Stomach (tissue), 19 donors: ENCODE measurements at regions of chr3 and their contacts with region 1.

Region 1: GRCh38 chr3:67357610-67358458 is 296.6 kb downstream of the SUCLG2 start:
- DNase-seq: peak in 1 of 2 donors; percentile 68
- H3K4me3 ChIP-seq: no peak overlapping the region
- H3K27ac ChIP-seq: no peak overlapping the region
- H3K4me1 ChIP-seq: no peaks in the 10 kb centered on the region
- H3K27me3 ChIP-seq: no peaks in the 10 kb centered on the region
- CTCF ChIP-seq: peak in 2 of 7 experiments; percentile 10 to 20
- EP300 ChIP-seq: no peak
- POLR2A ChIP-seq: no peak

Region 2: GRCh38 chr3:67113802-67114407 is 243.9 kb before region 1 on chr3:
- intact Hi-C with region 1: loop called (anchors 5 kb)
- DNase-seq: peak; percentile 82 to 94
- H3K4me3 ChIP-seq: no peak overlapping the region
- H3K27ac ChIP-seq: no peak overlapping the region
- H3K4me1 ChIP-seq: peaks cover 0 to 5% (median 0%) of the 10 kb centered on the region in 4 donors
- H3K27me3 ChIP-seq: no peaks in the 10 kb centered on the region
- CTCF ChIP-seq: peak in 5 of 7 experiments; percentile 59 to 88 (median 79)
- EP300 ChIP-seq: no peak
- POLR2A ChIP-seq: no peak

Region 3: DNA sequence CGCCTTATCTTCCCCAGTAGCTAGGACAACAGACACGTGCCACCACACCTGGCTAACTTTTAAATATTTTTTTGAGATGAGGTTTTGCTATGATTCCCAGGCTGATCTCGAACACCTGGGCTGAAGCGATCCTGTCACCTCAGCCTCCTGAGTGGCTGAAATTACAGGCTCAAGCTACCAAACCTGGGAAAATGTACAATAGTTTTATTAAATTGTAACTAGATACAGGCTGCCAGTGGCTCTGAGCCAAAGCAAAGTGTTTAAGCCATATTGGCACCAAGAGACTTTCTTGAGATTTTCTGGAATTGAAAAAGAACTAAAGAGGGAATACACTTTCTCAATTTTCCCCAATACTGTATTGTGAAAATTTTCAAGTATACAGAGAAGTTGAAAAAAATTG is 92.3 kb after region 1 on chr3:
- intact Hi-C with region 1: no loop called
- DNase-seq: peak in 1 of 2 donors; percentile 38
- H3K4me3 ChIP-seq: no peak overlapping the region
- H3K27ac ChIP-seq: no peak overlapping the region
- H3K4me1 ChIP-seq: no peaks in the 10 kb centered on the region
- H3K27me3 ChIP-seq: no peaks in the 10 kb centered on the region
- CTCF ChIP-seq: no peak
- EP300 ChIP-seq: no peak
- POLR2A ChIP-seq: no peak